GM12878 (cell line): ENCODE measurements at regions of chr13 and their contacts with region 1.

Region 1: GRCh38 chr13:20924758-20925394 is 22.3 kb upstream of the XPO4 start:
- DNase-seq: no peak
- ATAC-seq: peak; percentile 79
- H3K4me3 ChIP-seq: no peak overlapping the region
- H3K27ac ChIP-seq: no peak overlapping the region
- H3K4me1 ChIP-seq: no peaks in the 10 kb centered on the region
- H3K27me3 ChIP-seq: no peaks in the 10 kb centered on the region
- CTCF ChIP-seq: peak; percentile 76 to 80 (median 77)
- EP300 ChIP-seq: no peak
- POLR2A ChIP-seq: no peak
- RAD21 ChIP-seq: peak; percentile 89

Region 2: DNA sequence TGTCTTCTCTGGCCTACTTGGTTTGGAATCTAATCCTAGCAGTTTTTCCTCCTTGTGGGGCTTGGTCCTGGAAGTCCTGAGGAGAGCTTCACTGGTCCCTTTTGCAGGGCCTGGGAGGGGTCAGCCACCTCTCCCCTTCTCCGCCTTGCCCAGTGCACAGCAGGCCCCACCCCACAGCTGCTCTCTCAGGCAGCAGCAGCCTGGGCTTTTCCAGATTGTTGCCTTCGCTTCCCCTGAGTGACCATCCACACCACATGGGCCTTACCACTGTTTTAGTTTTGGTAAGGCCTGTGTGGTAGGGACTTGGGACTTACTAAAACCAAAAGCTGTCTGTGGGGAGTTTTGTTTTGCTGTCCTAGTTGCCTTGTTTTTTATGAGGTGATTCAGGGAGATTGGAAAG is 1279.9 kb before region 1 on chr13:
- CTCF ChIA-PET with region 1: no interaction called
- POLR2A ChIA-PET with region 1: no interaction called
- RAD21 ChIA-PET with region 1: no interaction called
- SMC1A ChIA-PET with region 1: no interaction called
- in situ Hi-C with region 1: no loop called
- intact Hi-C with region 1: no loop called
- DNase-seq: no peak
- ATAC-seq: peak; percentile 85
- H3K4me3 ChIP-seq: no peak overlapping the region
- H3K27ac ChIP-seq: no peak overlapping the region
- H3K4me1 ChIP-seq: no peaks in the 10 kb centered on the region
- H3K27me3 ChIP-seq: no peaks in the 10 kb centered on the region
- CTCF ChIP-seq: no peak
- EP300 ChIP-seq: no peak
- POLR2A ChIP-seq: no peak
- RAD21 ChIP-seq: no peak

Region 3: DNA sequence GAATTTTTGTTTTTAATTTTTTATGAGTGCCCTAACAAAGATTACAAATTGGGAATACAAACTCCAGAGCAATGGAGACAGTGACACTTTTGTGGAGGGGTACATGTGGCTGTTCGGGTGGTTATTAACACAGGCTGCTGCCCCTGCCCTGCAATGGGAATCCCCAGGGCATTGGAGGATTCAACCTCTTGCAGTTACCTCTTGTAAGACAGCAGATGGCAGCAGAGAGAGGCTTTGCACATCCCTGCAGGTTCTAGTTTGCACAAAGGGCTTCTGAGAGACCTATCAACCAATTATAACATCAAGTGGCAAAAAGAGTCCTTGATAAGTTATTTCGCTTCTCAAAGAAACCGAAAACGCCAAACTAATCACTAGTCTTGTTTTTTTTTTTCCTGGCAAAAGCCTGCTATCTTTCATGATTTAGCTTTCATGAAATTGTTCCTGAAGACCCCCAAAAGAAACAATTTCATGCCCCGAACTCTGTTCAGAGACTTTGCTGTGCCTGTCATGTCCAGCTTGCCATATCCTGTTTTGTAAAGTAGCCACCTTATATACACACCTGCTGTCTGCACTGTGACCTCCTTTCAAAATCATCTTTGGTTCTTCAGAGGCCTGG is 742.5 kb before region 1 on chr13:
- CTCF ChIA-PET with region 1: no interaction called
- POLR2A ChIA-PET with region 1: no interaction called
- RAD21 ChIA-PET with region 1: interaction called, 3 read pairs
- SMC1A ChIA-PET with region 1: interaction called, 3 read pairs
- in situ Hi-C with region 1: loop called (anchors 5 kb)
- intact Hi-C with region 1: loop called (anchors 1 kb)
- DNase-seq: peak; percentile 35
- ATAC-seq: peak; percentile 97
- H3K4me3 ChIP-seq: no peak overlapping the region
- H3K27ac ChIP-seq: no peak overlapping the region
- H3K4me1 ChIP-seq: no peaks in the 10 kb centered on the region
- H3K27me3 ChIP-seq: no peaks in the 10 kb centered on the region
- CTCF ChIP-seq: peak; percentile 76 to 85 (median 85)
- EP300 ChIP-seq: no peak
- POLR2A ChIP-seq: no peak
- RAD21 ChIP-seq: peak; percentile 79

Region 4: DNA sequence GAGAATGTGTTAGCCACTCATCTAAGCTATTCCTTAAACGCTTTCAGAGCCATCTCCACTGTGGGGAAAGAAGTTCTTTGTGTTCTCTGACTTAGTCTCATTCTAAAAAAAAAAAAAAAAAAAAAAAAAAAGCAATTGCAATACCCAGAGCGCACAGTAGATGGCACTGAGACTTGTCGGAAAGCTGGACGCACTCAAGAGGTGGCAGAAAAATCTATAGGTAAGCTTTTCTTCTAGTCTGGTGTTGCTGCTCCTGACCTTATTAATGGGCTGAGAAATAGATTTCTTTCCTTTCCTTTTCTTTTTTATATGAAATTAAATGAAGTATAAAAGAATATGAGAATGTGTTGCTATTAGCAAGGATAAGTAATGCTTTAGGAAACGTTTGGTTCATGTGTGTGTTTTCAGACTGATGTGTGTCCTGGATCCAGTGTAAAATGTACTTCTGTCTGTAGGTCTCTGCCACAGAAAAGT is 727.5 kb before region 1 on chr13:
- CTCF ChIA-PET with region 1: interaction called, 7 read pairs
- POLR2A ChIA-PET with region 1: no interaction called
- RAD21 ChIA-PET with region 1: interaction called, 6 read pairs
- SMC1A ChIA-PET with region 1: interaction called, 11 read pairs
- in situ Hi-C with region 1: no loop called
- intact Hi-C with region 1: no loop called
- DNase-seq: no peak
- ATAC-seq: peak; percentile 64
- H3K4me3 ChIP-seq: no peak overlapping the region
- H3K27ac ChIP-seq: no peak overlapping the region
- H3K4me1 ChIP-seq: peaks cover 6% of the 10 kb centered on the region; the same call in 1 of the 2 replicates
- H3K27me3 ChIP-seq: peaks cover 4 to 21% of the 10 kb centered on the region in 2 experiments; a peak in 3 of 4 replicates
- CTCF ChIP-seq: peak; percentile 71 to 79 (median 73)
- EP300 ChIP-seq: no peak
- POLR2A ChIP-seq: no peak
- RAD21 ChIP-seq: peak; percentile 85

Region 5: DNA sequence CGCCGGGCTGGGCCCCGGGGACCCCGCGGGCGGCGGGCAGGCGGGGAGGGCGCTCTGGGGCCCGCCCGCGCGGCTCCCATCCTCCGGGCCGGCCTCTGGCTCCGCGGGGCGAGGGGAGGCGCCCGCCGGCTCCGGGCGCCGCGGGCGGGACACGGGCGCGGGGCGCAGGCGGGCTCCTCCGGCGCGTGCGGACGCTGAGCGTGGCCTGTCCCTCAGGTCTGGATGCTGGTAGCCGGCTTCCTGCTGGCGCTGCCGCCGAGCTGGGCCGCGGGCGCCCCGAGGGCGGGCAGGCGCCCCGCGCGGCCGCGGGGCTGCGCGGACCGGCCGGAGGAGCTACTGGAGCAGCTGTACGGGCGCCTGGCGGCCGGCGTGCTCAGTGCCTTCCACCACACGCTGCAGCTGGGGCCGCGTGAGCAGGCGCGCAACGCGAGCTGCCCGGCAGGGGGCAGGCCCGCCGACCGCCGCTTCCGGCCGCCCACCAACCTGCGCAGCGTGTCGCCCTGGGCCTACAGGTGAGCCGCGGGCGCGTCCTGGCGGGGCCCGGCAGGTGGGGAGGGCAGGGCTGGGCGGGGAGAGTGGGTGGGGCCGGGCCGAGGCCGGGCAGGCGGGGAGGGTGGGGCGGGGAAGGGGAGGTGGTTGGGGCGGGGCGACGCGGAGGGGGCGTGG is 221.0 kb before region 1 on chr13:
- CTCF ChIA-PET with region 1: no interaction called
- POLR2A ChIA-PET with region 1: no interaction called
- RAD21 ChIA-PET with region 1: no interaction called
- SMC1A ChIA-PET with region 1: interaction called, 3 read pairs
- in situ Hi-C with region 1: loop called (anchors 5 kb)
- intact Hi-C with region 1: no loop called
- DNase-seq: peak; percentile 9
- ATAC-seq: peak; percentile 95
- H3K4me3 ChIP-seq: no peak overlapping the region
- H3K27ac ChIP-seq: no peak overlapping the region
- H3K4me1 ChIP-seq: peaks cover 6% of the 10 kb centered on the region
- H3K27me3 ChIP-seq: no peaks in the 10 kb centered on the region
- CTCF ChIP-seq: peak; percentile 48 to 57 (median 54); a peak in 5 of 6 replicates
- EP300 ChIP-seq: no peak
- POLR2A ChIP-seq: peak; percentile 65
- RAD21 ChIP-seq: no peak

Region 6: GRCh38 chr13:20713751-20714150 is 211.1 kb before region 1 on chr13:
- CTCF ChIA-PET with region 1: interaction called, 12 read pairs
- POLR2A ChIA-PET with region 1: no interaction called
- RAD21 ChIA-PET with region 1: interaction called, 3 read pairs
- SMC1A ChIA-PET with region 1: interaction called, 6 read pairs
- in situ Hi-C with region 1: loop called (anchors 5 kb)
- intact Hi-C with region 1: loop called (anchors 1 kb)
- DNase-seq: no peak
- ATAC-seq: no peak
- H3K4me3 ChIP-seq: no peak overlapping the region
- H3K27ac ChIP-seq: no peak overlapping the region
- H3K4me1 ChIP-seq: no peaks in the 10 kb centered on the region
- H3K27me3 ChIP-seq: no peaks in the 10 kb centered on the region
- CTCF ChIP-seq: no peak
- EP300 ChIP-seq: no peak
- POLR2A ChIP-seq: no peak
- RAD21 ChIP-seq: no peak

Region 7: DNA sequence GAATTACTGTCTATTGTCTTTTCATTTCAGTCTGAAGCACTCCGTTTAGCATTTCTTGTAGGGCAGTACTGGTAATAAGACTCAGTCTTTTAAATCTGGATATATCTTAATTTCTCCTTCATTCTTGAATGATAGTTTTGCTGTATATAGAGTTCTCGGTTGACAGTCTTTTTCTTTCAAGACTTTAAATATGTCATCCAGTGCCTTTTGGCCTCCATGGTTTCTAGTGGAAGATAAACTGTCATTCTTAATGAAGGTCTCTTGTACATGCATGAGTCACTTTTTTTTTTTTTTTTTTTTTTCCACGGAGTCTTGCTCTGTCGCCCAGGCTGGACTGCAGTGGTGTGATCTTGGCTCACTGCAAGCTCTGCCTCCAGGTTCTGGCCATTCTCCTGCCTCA is 561.4 kb after region 1 on chr13:
- CTCF ChIA-PET with region 1: no interaction called
- POLR2A ChIA-PET with region 1: no interaction called
- RAD21 ChIA-PET with region 1: no interaction called
- SMC1A ChIA-PET with region 1: no interaction called
- in situ Hi-C with region 1: no loop called
- intact Hi-C with region 1: loop called (anchors 5 kb)
- DNase-seq: no peak
- ATAC-seq: no peak
- H3K4me3 ChIP-seq: no peak overlapping the region
- H3K27ac ChIP-seq: no peak overlapping the region
- H3K4me1 ChIP-seq: no peaks in the 10 kb centered on the region
- H3K27me3 ChIP-seq: no peaks in the 10 kb centered on the region
- CTCF ChIP-seq: no peak
- EP300 ChIP-seq: no peak
- POLR2A ChIP-seq: no peak
- RAD21 ChIP-seq: no peak

Region 8: GRCh38 chr13:22793598-22794134 is 1868.8 kb after region 1 on chr13:
- CTCF ChIA-PET with region 1: no interaction called
- POLR2A ChIA-PET with region 1: no interaction called
- RAD21 ChIA-PET with region 1: no interaction called
- SMC1A ChIA-PET with region 1: no interaction called
- in situ Hi-C with region 1: loop called (anchors 25 kb)
- intact Hi-C with region 1: no loop called
- DNase-seq: no peak
- ATAC-seq: no peak
- H3K4me3 ChIP-seq: no peak overlapping the region
- H3K27ac ChIP-seq: no peak overlapping the region
- H3K4me1 ChIP-seq: no peaks in the 10 kb centered on the region
- H3K27me3 ChIP-seq: no peaks in the 10 kb centered on the region
- CTCF ChIP-seq: no peak
- EP300 ChIP-seq: no peak
- POLR2A ChIP-seq: no peak
- RAD21 ChIP-seq: no peak